ENCODE measurements at regions of chr19 and their contacts with region 1.

Region 1: DNA sequence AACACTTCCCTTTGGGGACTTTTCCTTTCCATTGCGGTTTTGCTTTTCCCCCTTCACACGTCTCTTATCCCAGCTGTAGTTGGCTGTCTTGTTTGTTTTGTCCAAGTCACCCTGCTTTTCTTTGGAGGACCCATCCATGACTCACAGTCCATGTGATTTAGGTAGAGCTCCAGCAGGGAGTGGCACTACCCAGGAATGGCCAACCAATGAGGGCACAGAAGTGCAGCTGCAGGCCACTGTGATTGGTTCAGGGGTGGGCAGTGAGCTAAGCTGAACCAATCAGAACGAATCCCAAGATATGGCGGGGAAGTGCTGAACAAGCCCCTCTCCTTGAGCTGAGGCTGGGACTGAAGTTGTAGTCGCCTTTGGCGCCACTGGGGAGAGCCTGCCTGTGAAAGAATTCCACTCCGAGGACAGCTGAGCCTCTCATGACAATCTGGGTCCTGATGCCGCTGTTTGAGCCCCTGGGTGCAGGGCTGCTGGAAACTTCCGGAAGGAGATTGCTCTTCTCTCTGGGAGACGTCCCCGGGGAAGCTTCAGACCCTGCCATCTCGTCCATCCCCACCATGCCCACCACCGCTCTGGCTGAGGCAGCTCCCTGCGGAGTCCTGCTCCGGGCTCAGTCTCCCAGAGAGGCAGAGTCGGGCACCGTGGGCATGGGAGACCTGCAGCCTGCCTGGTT is 62.9 kb upstream of the URI1 start:
- DNase-seq: peak; percentile 89 to 94
- ATAC-seq: peak; percentile 84 to 92
- H3K4me3 ChIP-seq: no peak overlapping the region
- H3K27ac ChIP-seq: peak overlapping the region; percentile 27 to 47; a peak in 3 of 6 replicates
- H3K4me1 ChIP-seq: peaks cover 11% of the 10 kb centered on the region; the same call in 1 of the 3 replicates
- CTCF ChIP-seq: no peak
- EP300 ChIP-seq: no peak
- POLR2A ChIP-seq: no peak
- RAD21 ChIP-seq: no peak

Region 2: DNA sequence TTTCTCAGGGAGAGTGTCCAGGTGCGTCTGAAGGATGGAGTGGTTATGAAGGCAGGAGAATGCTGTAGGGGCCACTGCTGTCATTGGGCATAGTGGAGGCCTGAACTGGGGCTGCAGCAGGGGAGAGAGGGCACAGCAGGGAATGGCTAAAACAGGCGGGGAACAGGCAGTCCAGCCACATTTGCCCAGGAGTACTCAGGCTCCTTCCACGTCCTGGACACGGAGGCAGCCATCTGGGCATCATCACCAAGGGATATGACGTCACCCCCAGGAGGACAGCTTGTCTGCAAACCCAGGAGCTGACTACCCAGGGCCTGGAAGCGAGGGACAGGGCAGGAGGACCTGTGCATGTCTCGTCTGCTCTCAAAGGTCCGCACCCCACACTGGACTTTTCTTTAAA is 331.1 kb before region 1 on chr19:
- CTCF ChIA-PET with region 1: no interaction called
- POLR2A ChIA-PET with region 1: no interaction called
- DNase-seq: no peak
- ATAC-seq: no peak; a peak in 2 of 6 replicates
- H3K4me3 ChIP-seq: no peak overlapping the region
- H3K27ac ChIP-seq: no peak overlapping the region
- H3K4me1 ChIP-seq: no peaks in the 10 kb centered on the region
- CTCF ChIP-seq: no peak
- EP300 ChIP-seq: no peak
- POLR2A ChIP-seq: no peak
- RAD21 ChIP-seq: no peak

Region 3: DNA sequence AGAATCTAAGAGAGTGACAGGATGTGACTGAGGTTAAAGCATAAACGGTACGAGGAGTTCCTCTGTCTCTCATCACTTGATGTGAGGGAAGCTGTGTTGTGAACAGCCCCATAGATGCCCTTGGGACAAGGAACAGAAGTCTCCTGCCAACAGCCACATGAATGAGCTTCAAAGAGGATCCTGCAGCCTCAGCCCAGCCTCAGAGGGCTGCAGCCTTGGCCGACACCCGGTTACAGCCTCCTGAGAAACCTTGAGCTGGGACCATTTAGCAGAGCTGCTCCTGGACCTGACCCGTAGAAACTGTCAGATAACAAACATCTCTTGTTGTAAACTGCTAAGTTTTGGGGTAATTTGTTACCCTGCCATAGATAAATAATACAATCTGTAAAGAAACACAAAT is 13.1 kb before region 1 on chr19:
- CTCF ChIA-PET with region 1: interaction called, 348 read pairs
- POLR2A ChIA-PET with region 1: no interaction called
- DNase-seq: no peak
- ATAC-seq: no peak
- H3K4me3 ChIP-seq: no peak overlapping the region
- H3K27ac ChIP-seq: no peak overlapping the region
- H3K4me1 ChIP-seq: no peaks in the 10 kb centered on the region
- CTCF ChIP-seq: no peak
- EP300 ChIP-seq: no peak
- POLR2A ChIP-seq: no peak
- RAD21 ChIP-seq: no peak

Region 4: DNA sequence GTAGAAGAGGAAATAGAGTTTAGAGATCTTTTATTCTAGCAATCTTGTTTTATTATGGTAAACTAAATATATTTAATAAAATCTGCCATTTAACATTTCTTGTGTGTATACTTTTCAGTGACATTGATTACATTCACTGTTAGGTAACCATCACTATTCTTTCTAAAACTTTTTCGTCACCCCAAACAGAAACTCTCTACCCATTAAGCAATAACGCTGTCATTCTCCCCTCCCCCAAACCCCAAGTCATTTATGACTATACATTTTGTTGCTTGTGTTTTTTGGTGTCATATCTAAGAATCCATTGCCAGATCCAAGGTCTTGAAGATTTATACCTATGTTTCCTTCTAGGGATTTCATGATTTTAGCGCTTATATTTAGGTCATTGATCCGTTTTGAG is 73.5 kb after region 1 on chr19:
- CTCF ChIA-PET with region 1: no interaction called
- POLR2A ChIA-PET with region 1: no interaction called
- DNase-seq: no peak
- ATAC-seq: no peak
- H3K4me3 ChIP-seq: no peak overlapping the region
- H3K27ac ChIP-seq: no peak overlapping the region
- H3K4me1 ChIP-seq: peaks cover 24% of the 10 kb centered on the region
- CTCF ChIP-seq: no peak
- EP300 ChIP-seq: no peak
- POLR2A ChIP-seq: no peak
- RAD21 ChIP-seq: no peak

Region 5: GRCh38 chr19:29978080-29978479 is 99.0 kb after region 1 on chr19:
- CTCF ChIA-PET with region 1: no interaction called
- POLR2A ChIA-PET with region 1: no interaction called
- DNase-seq: no peak
- ATAC-seq: no peak
- H3K4me3 ChIP-seq: no peak overlapping the region
- H3K27ac ChIP-seq: no peak overlapping the region
- H3K4me1 ChIP-seq: peaks cover 4% of the 10 kb centered on the region; the same call in 1 of the 3 replicates
- CTCF ChIP-seq: no peak
- EP300 ChIP-seq: no peak
- POLR2A ChIP-seq: no peak
- RAD21 ChIP-seq: no peak

Region 6: GRCh38 chr19:30060531-30061222 is 181.6 kb after region 1 on chr19:
- CTCF ChIA-PET with region 1: no interaction called
- POLR2A ChIA-PET with region 1: no interaction called
- DNase-seq: no peak
- ATAC-seq: peak in 1 of 2 experiments; percentile 13; a peak in 2 of 6 replicates
- H3K4me3 ChIP-seq: no peak overlapping the region
- H3K27ac ChIP-seq: no peak overlapping the region
- H3K4me1 ChIP-seq: no peaks in the 10 kb centered on the region
- CTCF ChIP-seq: no peak
- EP300 ChIP-seq: no peak
- POLR2A ChIP-seq: no peak
- RAD21 ChIP-seq: no peak

Measured in A549 (cell line).